Caco-2 (cell line): ENCODE measurements at regions of chr9 and their contacts with region 1.

Region 1: GRCh38 chr9:90773617-90774016 is 28.0 kb upstream of the SYK start:
- DNase-seq: no peak
- H3K4me3 ChIP-seq: no peak overlapping the region
- H3K4me3 Mint-ChIP-seq: no peak overlapping the region
- H3K27ac Mint-ChIP-seq: no peak overlapping the region
- H3K4me1 ChIP-seq: no peaks in the 10 kb centered on the region
- H3K4me1 Mint-ChIP-seq: no peaks in the 10 kb centered on the region
- H3K27me3 ChIP-seq: no peaks in the 10 kb centered on the region
- H3K27me3 Mint-ChIP-seq: no peaks in the 10 kb centered on the region
- CTCF ChIP-seq: peak in 1 of 2 experiments; percentile 31

Region 2: GRCh38 chr9:90735952-90736351 is 37.7 kb before region 1 on chr9:
- CTCF ChIA-PET with region 1: no interaction called
- POLR2A ChIA-PET with region 1: no interaction called
- intact Hi-C with region 1: no loop called
- DNase-seq: no peak
- H3K4me3 ChIP-seq: no peak overlapping the region
- H3K4me3 Mint-ChIP-seq: no peak overlapping the region
- H3K27ac Mint-ChIP-seq: no peak overlapping the region
- H3K4me1 ChIP-seq: no peaks in the 10 kb centered on the region
- H3K4me1 Mint-ChIP-seq: no peaks in the 10 kb centered on the region
- H3K27me3 ChIP-seq: no peaks in the 10 kb centered on the region
- H3K27me3 Mint-ChIP-seq: peaks cover 4% of the 10 kb centered on the region
- CTCF ChIP-seq: no peak

Region 3: DNA sequence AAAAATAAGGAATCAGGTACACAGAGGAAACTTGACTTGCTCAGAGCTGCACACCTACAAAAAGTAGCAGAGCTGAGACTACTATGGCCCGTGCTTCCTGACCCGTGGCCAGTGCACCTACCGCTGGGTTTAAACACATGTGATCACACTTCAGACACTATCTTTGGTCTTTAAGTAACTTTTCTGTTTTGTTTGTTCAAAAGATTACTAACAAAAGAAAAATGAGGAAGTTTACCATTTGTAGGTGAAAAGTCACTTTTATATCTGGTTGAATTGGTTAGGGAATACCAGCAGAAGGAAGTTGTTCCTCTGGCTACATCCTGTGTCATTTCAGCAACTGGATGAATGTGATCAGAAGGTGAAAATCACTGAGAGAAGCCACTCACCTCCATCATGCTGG is 21.5 kb after region 1 on chr9:
- CTCF ChIA-PET with region 1: no interaction called
- POLR2A ChIA-PET with region 1: no interaction called
- intact Hi-C with region 1: no loop called
- DNase-seq: no peak
- H3K4me3 ChIP-seq: no peak overlapping the region
- H3K4me3 Mint-ChIP-seq: no peak overlapping the region
- H3K27ac Mint-ChIP-seq: no peak overlapping the region
- H3K4me1 ChIP-seq: no peaks in the 10 kb centered on the region
- H3K4me1 Mint-ChIP-seq: no peaks in the 10 kb centered on the region
- H3K27me3 ChIP-seq: no peaks in the 10 kb centered on the region
- H3K27me3 Mint-ChIP-seq: peaks cover 4% of the 10 kb centered on the region
- CTCF ChIP-seq: no peak

Region 4: GRCh38 chr9:90870621-90871326 is 97.2 kb after region 1 on chr9:
- CTCF ChIA-PET with region 1: no interaction called
- POLR2A ChIA-PET with region 1: no interaction called
- intact Hi-C with region 1: loop called (anchors 5 kb)
- DNase-seq: peak in 1 of 2 experiments; percentile 18
- H3K4me3 ChIP-seq: no peak overlapping the region
- H3K4me3 Mint-ChIP-seq: no peak overlapping the region
- H3K27ac Mint-ChIP-seq: no peak overlapping the region
- H3K4me1 ChIP-seq: no peaks in the 10 kb centered on the region
- H3K4me1 Mint-ChIP-seq: no peaks in the 10 kb centered on the region
- H3K27me3 ChIP-seq: no peaks in the 10 kb centered on the region
- H3K27me3 Mint-ChIP-seq: no peaks in the 10 kb centered on the region
- CTCF ChIP-seq: peak; percentile 56 to 65